Activated CD4-positive, alpha-beta memory T cell treated with anti-CD3 and anti-CD28 coated beads for 36 hours (primary cell): ENCODE measurements at regions of chr15 and their contacts with region 1.

Region 1: GRCh38 chr15:40098489-40099261 is 10.0 kb downstream of the BMF start:
- DNase-seq: peak; percentile 83
- H3K4me3 Mint-ChIP-seq: peak overlapping the region; percentile 51
- H3K27ac Mint-ChIP-seq: peak overlapping the region; percentile 92
- H3K4me1 Mint-ChIP-seq: peaks cover 55% of the 10 kb centered on the region
- H3K27me3 Mint-ChIP-seq: no peaks in the 10 kb centered on the region

Region 2: DNA sequence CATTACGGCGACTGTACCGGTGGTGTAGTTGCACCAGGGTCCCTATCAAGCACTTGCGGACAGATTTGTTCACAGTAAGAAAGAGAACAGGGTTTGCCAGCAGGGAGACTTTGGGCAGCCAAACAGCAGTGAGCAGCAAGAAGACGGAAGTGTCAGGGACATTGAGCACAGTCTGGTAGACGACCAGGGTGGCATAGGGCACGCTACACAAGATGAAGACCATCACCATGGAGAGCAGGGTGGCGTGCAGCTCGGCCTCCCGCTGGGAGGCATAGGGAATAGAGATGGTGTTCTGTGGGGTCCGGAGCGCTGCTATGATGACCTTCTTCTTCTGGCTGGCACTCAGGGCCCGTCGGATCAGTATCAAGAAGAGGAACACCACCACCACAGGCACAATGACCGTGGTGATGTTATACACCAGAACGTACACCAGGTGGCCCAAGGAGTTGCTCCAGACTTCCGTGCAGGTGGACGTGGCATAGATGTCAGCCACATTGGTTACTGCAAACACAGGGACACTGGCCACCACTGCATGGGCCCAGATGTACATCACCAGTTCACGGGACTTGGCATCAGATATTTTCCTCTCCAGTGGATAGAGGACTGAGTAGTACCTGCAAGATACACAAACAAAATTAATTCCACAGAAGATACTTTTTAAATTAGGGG is 296.9 kb before region 1 on chr15:
- CTCF ChIA-PET with region 1: no interaction called
- POLR2A ChIA-PET with region 1: no interaction called
- intact Hi-C with region 1: no loop called
- DNase-seq: peak; percentile 38
- H3K4me3 Mint-ChIP-seq: no peak overlapping the region
- H3K27ac Mint-ChIP-seq: no peak overlapping the region
- H3K4me1 Mint-ChIP-seq: no peaks in the 10 kb centered on the region
- H3K27me3 Mint-ChIP-seq: peaks cover 18% of the 10 kb centered on the region

Region 3: DNA sequence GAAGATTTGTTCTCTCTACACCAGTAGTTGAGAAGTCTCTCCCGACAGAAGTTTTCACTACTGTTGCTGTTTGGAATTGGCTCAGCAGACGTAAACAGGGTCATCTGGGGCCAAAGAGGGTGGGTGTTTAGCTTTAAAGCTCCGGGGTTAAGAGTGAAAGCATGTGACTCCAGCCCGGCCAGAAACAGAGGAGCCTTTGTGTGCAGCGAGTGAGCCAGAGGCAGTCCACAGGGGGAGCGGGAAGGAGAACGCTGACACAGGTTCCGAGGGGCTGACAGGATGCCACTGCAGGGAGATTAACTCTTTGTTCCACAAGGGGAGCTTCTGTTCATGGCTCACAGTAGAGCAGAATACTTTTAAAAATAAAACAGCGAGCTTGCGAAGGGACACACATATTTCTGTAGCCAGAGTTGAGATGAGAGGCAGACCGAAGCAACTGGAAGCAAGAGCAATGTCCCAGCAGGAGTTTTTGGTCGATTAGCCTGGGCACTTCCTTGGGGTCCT is 16.9 kb before region 1 on chr15:
- CTCF ChIA-PET with region 1: interaction called, 3 read pairs
- POLR2A ChIA-PET with region 1: interaction called, 3 read pairs
- intact Hi-C with region 1: loop called (anchors 2 kb)
- DNase-seq: no peak
- H3K4me3 Mint-ChIP-seq: no peak overlapping the region
- H3K27ac Mint-ChIP-seq: no peak overlapping the region
- H3K4me1 Mint-ChIP-seq: peaks cover 24% of the 10 kb centered on the region
- H3K27me3 Mint-ChIP-seq: peaks cover 43% of the 10 kb centered on the region

Region 4: DNA sequence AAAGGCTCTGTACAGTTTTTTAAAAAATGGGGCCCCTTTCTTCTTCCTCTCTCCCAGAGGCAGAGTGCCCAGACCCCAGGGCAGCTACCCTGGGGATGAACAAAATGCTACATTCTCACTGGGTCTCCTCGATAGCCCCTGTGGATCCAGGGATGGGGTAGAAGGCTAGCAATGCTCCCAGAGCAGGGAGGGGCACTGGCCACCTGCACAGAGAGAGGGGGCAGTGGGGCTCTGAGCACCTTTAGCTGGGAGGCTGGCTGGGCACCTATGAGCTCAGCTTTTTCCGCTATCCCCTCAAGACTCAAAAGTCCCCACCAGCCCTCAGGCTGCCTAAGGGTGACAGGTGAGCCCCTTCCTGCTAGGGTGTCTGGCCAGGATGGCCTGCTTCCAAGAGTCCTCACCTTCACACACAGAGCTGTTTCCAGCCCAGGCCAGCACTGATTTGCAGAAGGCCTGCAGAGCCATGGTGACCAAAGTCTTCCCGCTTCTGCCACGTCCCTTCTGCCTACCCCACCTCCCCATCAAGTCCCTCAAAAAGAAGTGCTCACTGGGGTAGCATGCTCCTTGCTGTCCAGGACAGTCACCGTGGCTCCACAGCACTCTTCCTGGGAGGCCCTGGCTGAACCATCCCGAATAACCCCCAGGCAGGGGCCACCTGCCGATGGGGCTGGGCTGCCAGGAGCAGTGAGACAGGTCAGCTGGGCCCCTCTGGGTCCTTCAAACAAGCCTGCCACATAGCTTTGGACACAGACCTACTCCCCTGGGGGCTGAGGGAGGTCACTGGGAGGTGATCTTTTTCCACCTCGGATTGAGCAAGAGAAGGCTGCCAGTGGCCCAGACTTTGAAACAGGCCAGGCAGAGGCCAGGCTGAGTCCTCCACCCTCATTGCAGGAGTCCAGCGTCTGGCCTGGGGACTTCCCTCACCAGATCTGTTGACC is 10.4 kb before region 1 on chr15:
- CTCF ChIA-PET with region 1: interaction called, 91 read pairs
- POLR2A ChIA-PET with region 1: no interaction called
- intact Hi-C with region 1: no loop called
- DNase-seq: no peak
- H3K4me3 Mint-ChIP-seq: no peak overlapping the region
- H3K27ac Mint-ChIP-seq: no peak overlapping the region
- H3K4me1 Mint-ChIP-seq: peaks cover 5% of the 10 kb centered on the region
- H3K27me3 Mint-ChIP-seq: peaks cover 18% of the 10 kb centered on the region